K562 (cell line): ENCODE measurements at regions of chr7 and their contacts with region 1.

Region 1: DNA sequence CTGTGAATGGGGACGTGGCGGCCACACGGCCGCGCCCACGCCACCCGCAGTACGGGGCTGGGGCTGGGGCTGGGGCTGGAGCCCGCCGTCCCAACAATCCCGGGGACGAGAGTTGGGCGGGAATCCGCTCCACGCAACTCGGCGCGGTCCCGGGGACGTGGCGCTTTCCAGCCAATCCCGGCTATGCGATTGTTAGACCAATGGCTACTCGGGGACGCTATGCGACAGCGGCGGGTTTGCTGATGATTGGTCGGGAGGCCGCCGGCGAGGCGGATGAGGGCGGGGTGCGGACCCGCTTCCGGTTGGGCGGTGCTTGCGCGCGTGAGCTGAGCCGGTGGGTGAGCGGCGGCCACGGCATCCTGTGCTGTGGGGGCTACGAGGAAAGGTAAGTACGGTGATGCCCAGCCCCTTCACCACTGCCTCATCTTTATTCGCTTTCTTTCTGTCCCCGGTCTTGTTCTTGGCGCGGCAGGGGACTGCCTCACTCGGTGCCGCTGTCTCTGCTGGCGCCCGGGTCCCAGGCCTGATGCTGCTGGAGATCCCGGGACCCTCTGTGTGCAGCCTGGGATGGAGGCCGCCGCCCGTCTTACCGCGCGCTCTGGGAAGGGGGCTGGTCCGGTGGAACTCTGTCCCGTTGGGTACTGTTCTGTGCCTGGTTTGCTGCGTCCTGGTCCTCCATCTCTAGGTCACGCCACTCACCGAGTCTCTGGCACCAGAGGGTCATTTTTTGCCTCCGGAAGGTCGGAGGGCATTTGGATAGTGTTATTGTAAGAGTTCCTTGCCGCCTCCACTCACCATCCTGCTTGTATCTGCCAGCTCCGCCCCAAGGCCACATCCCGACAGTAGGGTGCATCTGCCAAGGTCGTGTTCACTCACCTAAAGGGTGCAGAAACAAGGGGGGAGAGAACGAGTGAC is at the start of gene CALU:
- DNase-seq: peak; percentile 100
- ATAC-seq: peak; percentile 96
- H3K4me3 ChIP-seq: peak within 1 kb of the TSS; percentile 86
- H3K27ac ChIP-seq: peak within 1 kb of the TSS; percentile 90
- H3K4me1 ChIP-seq: peaks cover 19 to 57% of the 10 kb centered on the region in 2 experiments
- H3K27me3 ChIP-seq: no peaks in the 10 kb centered on the region
- CTCF ChIP-seq: no peak
- EP300 ChIP-seq: peak; percentile 46
- POLR2A ChIP-seq: peak; percentile 97
- RAD21 ChIP-seq: peak in 1 of 2 experiments; percentile 15; a peak in 1 of 4 replicates
- polyA plus RNA-seq, gene CALU: 215 to 286 TPM

Region 2: DNA sequence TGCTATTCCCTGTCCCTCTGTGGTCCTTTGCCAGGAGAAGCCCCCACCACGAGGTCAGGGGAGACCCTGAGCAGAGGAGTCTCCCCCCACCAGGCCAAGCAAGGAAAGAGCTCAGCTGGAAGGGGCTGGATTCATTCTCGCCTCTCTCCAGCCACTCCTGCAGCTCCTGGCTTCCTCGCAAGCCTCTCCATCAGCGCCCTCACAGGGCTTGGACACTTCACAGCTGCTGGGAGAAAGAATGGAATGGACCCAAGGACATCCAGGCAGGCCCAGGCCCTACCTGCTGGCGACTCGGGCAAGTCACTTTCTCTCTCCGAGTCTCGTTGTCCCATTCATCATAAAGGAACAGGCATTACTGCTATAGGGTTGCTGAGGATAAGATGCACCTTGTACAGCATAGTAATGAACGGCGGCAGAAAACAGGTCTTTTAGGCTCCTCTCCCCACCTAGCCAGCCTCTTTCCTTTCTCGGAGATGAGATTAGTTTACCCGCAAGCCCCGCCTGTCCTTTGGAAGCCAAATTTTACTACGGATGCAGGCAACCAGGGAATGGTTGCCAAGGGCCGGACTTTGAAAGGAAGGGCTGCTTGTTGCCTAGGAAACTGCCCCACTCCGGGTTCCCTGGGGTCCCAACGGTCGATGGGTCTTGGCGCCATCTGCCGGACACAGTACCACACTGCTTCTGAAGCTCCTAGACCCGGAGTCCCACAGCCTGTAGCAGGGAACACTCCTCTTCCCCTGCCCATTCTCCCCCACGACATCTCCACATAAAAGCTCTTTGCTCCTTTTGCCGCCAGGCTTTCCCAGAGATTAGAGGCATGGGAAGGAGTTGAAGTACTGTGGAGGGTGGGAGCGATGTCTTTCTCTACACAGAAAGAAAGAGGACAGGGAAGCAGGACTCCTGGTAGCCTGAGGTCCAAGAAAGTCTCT is 351.8 kb before region 1 on chr7:
- CTCF ChIA-PET with region 1: no interaction called
- POLR2A ChIA-PET with region 1: no interaction called
- in situ Hi-C with region 1: no loop called
- intact Hi-C with region 1: no loop called
- DNase-seq: peak; percentile 88 to 97 (median 96)
- ATAC-seq: peak; percentile 92
- H3K4me3 ChIP-seq: no peak overlapping the region
- H3K27ac ChIP-seq: no peak overlapping the region
- H3K4me1 ChIP-seq: peaks cover 5 to 20% of the 10 kb centered on the region in 2 experiments; a peak in 4 of 5 replicates
- H3K27me3 ChIP-seq: no peaks in the 10 kb centered on the region
- CTCF ChIP-seq: peak; percentile 95 to 97 (median 97)
- EP300 ChIP-seq: no peak
- POLR2A ChIP-seq: no peak
- RAD21 ChIP-seq: peak; percentile 92 to 93

Region 3: GRCh38 chr7:128710481-128710880 is 28.8 kb before region 1 on chr7:
- CTCF ChIA-PET with region 1: no interaction called
- POLR2A ChIA-PET with region 1: interaction called, 24 read pairs
- in situ Hi-C with region 1: no loop called
- intact Hi-C with region 1: no loop called
- DNase-seq: no peak
- ATAC-seq: no peak
- H3K4me3 ChIP-seq: no peak overlapping the region
- H3K27ac ChIP-seq: no peak overlapping the region
- H3K4me1 ChIP-seq: 0 out of 5 replicates have a peak, but pooled peaks cover 0 to 3% of the 10 kb centered on the region in 2 experiments
- H3K27me3 ChIP-seq: peaks cover 9 to 15% of the 10 kb centered on the region in 2 experiments; a peak in 4 of 5 replicates
- CTCF ChIP-seq: no peak
- EP300 ChIP-seq: no peak
- POLR2A ChIP-seq: no peak
- RAD21 ChIP-seq: no peak

Region 4: DNA sequence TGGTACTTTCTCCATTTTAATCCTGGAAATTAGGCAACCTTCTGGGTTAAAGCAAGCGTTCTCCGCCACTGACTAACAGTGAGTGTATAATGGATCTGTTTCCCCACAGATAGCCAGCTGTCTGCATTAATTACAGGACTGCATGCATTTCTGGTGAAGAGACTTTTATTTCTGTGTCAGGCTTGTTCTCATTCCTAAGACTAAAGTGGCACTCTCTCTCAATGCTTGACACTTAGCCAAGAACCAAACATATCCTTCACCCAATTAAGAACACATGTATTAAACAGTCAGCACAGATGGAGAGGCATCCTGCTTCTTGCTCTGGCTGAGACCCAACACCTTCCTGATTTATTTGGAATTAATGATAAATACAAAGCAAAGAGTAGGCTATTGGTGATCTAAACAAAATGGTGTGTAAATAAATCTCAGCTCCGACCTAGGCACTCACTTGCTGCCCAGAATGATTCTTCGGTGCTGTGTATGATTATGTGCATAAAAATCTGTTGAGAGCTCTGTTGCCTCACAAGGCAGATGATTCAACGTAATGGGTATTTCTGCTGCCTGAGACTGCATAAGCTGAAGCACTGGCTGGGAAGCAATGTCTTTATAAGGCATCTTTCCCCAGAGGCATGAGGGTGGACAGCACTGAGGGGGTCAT is 16.6 kb after region 1 on chr7:
- CTCF ChIA-PET with region 1: no interaction called
- POLR2A ChIA-PET with region 1: interaction called, 216 read pairs
- in situ Hi-C with region 1: no loop called
- intact Hi-C with region 1: no loop called
- DNase-seq: no peak
- ATAC-seq: no peak; the same call in 2 of the 3 replicates
- H3K4me3 ChIP-seq: no peak overlapping the region
- H3K27ac ChIP-seq: no peak overlapping the region
- H3K4me1 ChIP-seq: no peaks in the 10 kb centered on the region
- H3K27me3 ChIP-seq: no peaks in the 10 kb centered on the region
- CTCF ChIP-seq: no peak
- EP300 ChIP-seq: no peak
- POLR2A ChIP-seq: no peak
- RAD21 ChIP-seq: no peak

Region 5: DNA sequence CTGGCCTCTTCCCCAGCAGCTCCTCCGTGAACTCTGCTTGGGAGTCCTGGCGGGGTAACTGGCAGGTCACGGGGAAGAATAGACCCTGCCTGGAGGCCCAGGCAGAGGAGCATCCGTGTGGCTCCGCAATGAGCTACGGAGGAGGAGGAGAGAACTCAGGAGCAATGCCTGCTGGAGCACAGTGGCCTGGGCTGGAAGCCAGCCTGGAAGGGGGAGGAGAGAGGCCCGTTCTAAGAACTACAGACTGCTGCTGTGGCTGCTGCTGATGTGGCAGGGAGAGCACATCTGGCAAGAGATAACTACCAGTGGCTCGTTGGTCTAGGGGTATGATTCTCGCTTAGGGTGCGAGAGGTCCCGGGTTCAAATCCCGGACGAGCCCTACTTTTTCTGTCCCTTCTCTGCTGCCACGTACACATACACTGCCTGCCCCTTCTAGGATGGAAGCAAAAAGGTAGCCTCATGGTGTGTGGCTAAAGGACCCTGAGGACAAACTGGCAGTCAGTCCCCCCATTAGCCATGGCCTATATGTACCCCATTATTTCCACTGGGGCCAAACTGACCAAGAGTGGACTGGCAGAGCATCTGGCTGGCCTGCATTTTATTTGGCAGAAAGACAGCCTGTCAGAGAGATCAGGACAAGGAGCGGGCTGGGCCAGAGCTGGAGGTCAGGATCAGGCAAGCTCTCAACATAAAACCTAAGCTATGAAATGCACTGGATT is 44.0 kb after region 1 on chr7:
- CTCF ChIA-PET with region 1: no interaction called
- POLR2A ChIA-PET with region 1: interaction called, 18 read pairs
- in situ Hi-C with region 1: no loop called
- intact Hi-C with region 1: loop called (anchors 2 kb)
- DNase-seq: peak; percentile 92 to 95 (median 94)
- ATAC-seq: peak; percentile 93
- H3K4me3 ChIP-seq: peak overlapping the region; percentile 37
- H3K27ac ChIP-seq: peak overlapping the region; percentile 28
- H3K4me1 ChIP-seq: peaks cover 5 to 18% of the 10 kb centered on the region in 2 experiments; a peak in 4 of 5 replicates
- H3K27me3 ChIP-seq: no peaks in the 10 kb centered on the region; a peak in 1 of 5 replicates
- CTCF ChIP-seq: peak in 2 of 3 experiments; percentile 2 to 17; a peak in 1 of 6 replicates
- EP300 ChIP-seq: peak; percentile 86
- POLR2A ChIP-seq: no peak; the same call in 1 of the 2 replicates
- RAD21 ChIP-seq: peak; percentile 17 to 26; a peak in 2 of 4 replicates

Region 6: DNA sequence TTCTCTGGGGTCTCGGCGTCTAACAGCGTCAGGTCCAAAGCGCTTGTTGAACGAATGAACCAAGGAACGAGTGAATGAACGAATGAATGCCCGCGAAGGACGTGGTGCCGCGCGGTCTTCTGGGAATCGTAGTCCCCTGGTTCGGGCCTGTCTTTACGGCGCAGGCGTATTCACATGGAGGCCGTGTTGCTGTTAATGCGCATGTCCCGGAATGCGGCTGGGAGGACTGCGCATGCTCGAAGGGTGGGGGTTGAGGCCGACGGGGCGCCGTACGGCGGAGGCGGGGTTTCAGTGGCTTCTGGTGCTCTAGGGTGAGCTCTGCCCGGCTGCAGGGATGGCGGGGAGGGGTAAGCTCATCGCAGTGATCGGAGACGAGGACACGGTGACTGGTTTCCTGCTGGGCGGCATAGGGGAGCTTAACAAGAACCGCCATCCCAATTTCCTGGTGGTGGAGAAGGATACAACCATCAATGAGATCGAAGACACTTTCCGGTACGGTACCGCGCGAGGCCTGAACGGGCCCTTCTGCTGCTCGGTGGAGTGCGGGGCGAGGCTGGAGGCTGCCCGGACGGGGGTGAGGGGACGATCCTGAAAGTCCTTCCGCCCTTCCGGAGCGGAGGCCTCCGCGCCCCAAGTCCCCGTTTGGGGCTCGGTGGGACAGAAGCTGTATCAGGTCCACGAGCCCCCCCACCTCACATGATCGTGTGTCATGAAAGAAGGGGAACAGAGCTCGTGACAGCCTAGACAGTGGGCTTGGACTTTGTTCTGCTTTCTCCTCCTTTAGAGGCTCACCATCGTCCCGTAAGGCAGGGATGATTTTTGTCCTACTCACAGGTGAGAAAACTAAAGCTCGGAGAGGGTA is 123.5 kb after region 1 on chr7 and contains the start of gene ATP6V1F:
- CTCF ChIA-PET with region 1: no interaction called
- POLR2A ChIA-PET with region 1: interaction called, 40 read pairs
- in situ Hi-C with region 1: no loop called
- intact Hi-C with region 1: loop called (anchors 2 kb)
- DNase-seq: peak; percentile 100
- ATAC-seq: peak; percentile 73
- H3K4me3 ChIP-seq: peak within 1 kb of the TSS; percentile 71
- H3K27ac ChIP-seq: peak within 1 kb of the TSS; percentile 87
- H3K4me1 ChIP-seq: peaks cover 38 to 68% of the 10 kb centered on the region in 2 experiments
- H3K27me3 ChIP-seq: no peaks in the 10 kb centered on the region
- CTCF ChIP-seq: peak in 1 of 3 experiments; percentile 12; a peak in 2 of 6 replicates
- EP300 ChIP-seq: no peak
- POLR2A ChIP-seq: peak; percentile 90
- RAD21 ChIP-seq: no peak
- polyA plus RNA-seq, gene ATP6V1F: 733 to 1,123 TPM